Activated CD4-positive, alpha-beta T cell treated with anti-CD3 and anti-CD28 coated beads, Interleukin-2, amount 10 ng/mL, durations not matched to agents 24 days and 14 days (primary cell): ENCODE measurements at regions of chr12 and their contacts with region 1.

Region 1: DNA sequence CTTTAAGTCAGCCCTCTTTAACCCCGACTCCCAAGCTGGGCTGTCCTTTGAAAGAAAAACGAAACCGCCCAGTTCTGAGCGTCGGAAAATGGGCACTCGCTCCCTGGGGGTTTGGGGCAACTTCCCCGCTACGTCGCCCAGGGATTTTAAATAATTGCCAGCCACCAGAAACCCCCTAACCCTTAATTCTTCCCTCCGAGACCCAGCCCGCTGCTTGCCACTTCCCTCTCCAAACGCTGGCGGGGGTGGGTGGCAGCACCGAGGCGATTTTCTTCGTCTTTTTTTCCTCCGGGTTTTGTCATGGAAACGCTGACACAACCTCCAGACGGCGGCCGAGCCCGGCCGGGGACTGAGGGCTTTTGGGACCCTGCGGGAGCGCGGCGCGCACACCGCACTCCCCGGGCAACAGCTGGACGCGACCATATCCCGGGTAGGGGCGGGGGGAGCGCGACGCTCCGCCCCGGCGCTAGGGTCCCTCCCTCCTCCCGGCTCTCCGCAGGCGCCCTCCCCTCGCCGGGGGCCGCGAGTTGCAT is at the start of gene CHST11:
- DNase-seq: peak; percentile 94
- H3K4me3 Mint-ChIP-seq: peak within 1 kb of the TSS; percentile 99
- H3K27ac Mint-ChIP-seq: peak within 1 kb of the TSS; percentile 97
- H3K4me1 Mint-ChIP-seq: peaks cover 40% of the 10 kb centered on the region
- H3K27me3 Mint-ChIP-seq: peaks cover 2% of the 10 kb centered on the region
- total RNA-seq, gene CHST11: 44.9 and 46.2 TPM in 2 replicates

Region 2: DNA sequence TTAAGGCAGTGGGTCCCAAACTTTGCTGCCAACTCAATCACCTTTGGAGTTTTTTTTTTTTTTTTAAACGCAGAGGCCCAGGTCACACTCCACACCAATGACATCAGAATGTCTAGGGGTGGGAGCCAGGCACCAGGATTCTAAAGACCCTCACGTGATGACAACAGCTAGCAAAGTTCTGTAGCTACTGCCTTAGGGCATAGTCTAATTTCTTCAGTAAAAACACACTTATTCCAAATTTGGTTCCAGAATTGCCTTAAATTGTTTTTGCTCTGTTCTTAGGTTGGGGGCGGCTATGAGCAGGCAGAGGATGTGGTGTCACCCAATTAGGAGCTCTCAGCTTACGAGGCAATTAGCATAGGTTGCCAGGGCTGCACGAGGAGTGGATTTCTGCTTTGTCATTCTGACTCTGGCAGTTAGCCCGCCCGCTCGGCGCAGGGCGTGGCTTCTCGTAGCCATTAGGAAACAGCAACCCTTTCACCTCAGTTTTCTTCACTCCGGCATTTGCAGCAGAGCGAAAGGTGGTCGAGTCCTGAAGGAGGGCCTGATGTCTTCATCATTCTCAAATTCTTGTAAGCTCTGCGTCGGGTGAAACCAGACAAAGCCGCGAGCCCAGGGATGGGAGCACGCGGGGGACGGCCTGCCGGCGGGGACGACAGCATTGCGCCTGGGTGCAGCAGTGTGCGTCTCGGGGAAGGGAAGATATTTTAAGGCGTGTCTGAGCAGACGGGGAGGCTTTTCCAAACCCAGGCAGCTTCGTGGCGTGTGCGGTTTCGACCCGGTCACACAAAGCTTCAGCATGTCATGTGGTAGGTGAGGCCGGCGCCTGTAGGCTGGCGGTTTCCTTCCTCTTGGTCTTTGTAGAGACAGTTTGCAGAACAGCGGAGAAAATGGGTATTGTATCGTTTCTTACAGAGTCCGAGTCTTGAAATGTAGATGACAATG is 169.7 kb before region 1 on chr12:
- intact Hi-C with region 1: loop called (anchors 5 kb)
- DNase-seq: peak; percentile 97
- H3K4me3 Mint-ChIP-seq: peak overlapping the region; percentile 96
- H3K27ac Mint-ChIP-seq: peak overlapping the region; percentile 98
- H3K4me1 Mint-ChIP-seq: peaks cover 25% of the 10 kb centered on the region
- H3K27me3 Mint-ChIP-seq: no peaks in the 10 kb centered on the region

Region 3: DNA sequence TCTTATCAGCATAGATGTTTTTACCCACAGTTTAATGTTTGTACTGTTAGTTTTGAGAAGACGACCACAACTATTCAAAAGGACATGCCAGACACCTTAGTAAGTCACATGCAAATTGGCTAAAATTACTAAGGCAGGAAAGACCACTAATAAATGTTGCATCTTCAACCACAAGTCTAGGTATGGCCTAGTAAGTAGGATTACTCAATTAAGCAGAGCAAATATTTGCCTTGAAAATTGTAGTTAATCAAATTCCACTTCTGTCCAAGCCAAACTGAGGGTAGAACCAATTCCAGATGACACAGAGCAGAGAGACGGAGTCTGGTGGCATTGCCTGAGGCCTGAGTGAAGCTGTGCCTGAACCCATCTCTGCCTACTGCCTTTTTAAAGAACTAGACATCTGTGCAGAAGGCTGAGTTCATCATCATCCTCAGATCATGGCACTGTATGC is 29.4 kb before region 1 on chr12:
- intact Hi-C with region 1: no loop called
- DNase-seq: no peak
- H3K4me3 Mint-ChIP-seq: no peak overlapping the region
- H3K27ac Mint-ChIP-seq: no peak overlapping the region
- H3K4me1 Mint-ChIP-seq: peaks cover 2% of the 10 kb centered on the region
- H3K27me3 Mint-ChIP-seq: peaks cover 4% of the 10 kb centered on the region

Region 4: GRCh38 chr12:104494137-104494792 is 37.8 kb after region 1 on chr12:
- intact Hi-C with region 1: loop called (anchors 2 kb)
- DNase-seq: peak; percentile 77
- H3K4me3 Mint-ChIP-seq: peak overlapping the region; percentile 81
- H3K27ac Mint-ChIP-seq: peak overlapping the region; percentile 81
- H3K4me1 Mint-ChIP-seq: peaks cover 74% of the 10 kb centered on the region
- H3K27me3 Mint-ChIP-seq: no peaks in the 10 kb centered on the region

Region 5: DNA sequence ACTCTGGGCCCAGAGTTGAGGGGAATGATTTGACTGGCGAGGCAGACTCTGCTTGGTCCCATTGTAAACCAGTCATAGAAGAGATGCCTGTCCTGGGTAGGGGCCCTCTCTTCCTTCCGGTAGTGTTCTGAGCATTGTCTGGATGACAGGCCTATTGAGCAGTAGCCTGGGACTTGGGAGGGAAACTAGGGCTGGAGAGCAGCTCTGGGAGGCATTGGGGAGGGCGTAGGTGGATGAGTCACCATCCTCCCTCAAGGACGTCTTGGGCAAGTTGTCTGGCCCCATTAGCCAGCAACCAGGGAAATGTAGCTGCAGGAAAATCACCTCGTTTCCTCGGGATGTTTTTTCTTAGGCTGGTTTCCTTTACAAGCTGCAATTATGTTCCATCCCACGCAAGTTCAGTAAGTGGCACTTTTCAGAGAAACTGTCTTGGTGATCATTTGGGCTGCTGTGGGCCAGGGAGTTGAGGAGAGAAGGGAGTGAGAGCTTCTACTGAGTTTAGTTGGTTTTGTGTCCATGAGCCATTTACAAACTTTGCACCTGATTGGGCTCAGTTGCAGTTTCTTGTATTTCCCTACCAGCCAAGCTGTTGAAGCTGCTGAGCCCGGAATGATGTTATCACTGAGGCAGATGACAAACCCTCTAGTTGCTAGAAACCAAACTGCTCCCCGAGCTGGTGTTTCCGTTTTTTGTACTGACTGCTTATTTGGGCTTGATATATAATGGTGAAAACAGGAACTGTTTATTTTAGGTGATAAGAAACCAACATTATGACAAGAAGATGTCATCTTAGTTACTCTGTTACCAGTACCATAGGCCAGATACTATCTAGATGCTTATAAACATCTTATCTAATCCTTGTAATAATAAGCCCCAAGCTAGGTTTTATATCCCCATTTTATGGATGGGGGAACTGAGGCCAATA is 147.8 kb after region 1 on chr12:
- intact Hi-C with region 1: loop called (anchors 1 kb)
- DNase-seq: peak; percentile 85
- H3K4me3 Mint-ChIP-seq: peak overlapping the region; percentile 55
- H3K27ac Mint-ChIP-seq: peak overlapping the region; percentile 85
- H3K4me1 Mint-ChIP-seq: peaks cover 59% of the 10 kb centered on the region
- H3K27me3 Mint-ChIP-seq: no peaks in the 10 kb centered on the region

Region 6: DNA sequence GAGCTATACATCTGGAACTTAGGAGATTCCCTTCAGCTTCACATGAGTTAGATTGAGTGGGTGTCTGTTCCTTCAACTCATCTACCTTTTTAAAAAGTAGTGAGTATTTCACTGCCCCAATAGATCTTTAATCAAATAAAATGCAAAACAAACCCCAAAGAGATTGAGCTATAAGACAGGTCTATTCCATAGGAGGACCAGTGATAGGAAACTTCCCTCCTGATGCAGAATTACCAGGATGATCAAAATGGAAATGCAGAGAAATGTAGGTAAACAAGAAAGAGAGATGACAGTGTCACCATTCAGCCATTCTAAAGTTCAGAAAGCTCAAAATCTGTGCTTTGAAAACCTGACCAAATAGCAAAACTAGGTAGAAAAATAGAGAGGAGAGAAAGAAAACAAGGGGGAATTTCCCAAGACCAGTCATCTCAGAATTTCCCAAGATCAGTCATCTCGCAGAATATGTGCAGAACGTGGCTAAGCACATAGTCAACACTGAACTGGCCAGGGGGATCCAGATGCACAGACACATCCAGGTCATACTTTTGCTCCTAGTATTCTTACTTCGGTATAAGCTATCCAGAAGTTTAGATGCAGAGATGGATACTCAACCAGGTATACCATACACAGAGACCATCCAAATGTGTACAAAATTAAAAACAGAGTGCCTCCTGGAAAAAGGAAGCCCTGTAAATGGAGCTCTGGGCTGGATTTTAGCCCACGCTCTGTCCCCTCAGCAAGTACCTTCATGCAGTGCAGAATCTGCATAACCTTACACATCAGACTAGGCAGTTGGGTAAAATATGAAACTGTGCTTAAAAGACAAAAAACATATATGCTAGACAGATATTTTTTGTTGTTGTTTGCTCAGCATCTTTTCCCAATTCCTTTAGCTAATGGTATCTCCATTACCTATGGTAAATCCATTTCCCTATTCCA is 474.2 kb after region 1 on chr12:
- intact Hi-C with region 1: loop called (anchors 5 kb)
- DNase-seq: peak; percentile 79
- H3K4me3 Mint-ChIP-seq: peak overlapping the region; percentile 39
- H3K27ac Mint-ChIP-seq: peak overlapping the region; percentile 87
- H3K4me1 Mint-ChIP-seq: peaks cover 41% of the 10 kb centered on the region
- H3K27me3 Mint-ChIP-seq: no peaks in the 10 kb centered on the region

Region 7: DNA sequence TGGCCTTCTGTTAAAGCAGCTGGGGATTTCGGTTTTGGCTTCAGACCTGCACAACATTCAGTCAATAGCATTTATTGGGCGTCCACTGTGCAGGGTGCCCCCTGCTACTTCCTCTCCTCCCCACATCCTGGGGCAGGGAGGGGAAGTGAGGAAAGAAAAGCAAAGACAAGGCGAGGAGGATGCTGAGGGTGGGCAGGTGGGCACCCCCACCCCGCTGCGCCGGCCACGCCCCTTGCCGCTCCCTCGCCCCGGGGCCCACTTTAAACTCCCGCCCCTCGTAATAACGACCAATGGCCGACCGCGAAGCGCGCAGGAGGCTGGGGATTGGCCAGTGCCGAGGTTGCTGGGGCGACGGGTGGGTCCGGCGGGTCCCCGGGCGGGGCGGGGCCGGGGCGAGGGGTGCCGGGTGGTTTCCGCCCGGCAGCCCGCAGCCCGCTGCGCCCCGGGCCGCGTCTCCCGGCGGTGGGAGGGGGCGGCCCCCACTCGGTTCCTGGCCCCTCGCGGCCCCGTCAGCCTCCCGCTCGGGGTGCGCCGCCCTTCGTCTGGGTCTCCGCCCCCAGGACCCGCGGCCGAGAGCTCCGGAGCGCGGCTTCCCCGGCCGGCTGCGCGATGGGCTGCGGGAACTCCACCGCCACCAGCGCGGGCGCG is 873.9 kb after region 1 on chr12 and contains the start of gene C12orf75:
- intact Hi-C with region 1: loop called (anchors 5 kb)
- DNase-seq: peak; percentile 98
- H3K4me3 Mint-ChIP-seq: peak within 1 kb of the TSS; percentile 82
- H3K27ac Mint-ChIP-seq: peak within 1 kb of the TSS; percentile 91
- H3K4me1 Mint-ChIP-seq: peaks cover 72% of the 10 kb centered on the region
- H3K27me3 Mint-ChIP-seq: no peaks in the 10 kb centered on the region
- total RNA-seq, gene C12orf75: 91.4 and 96.1 TPM in 2 replicates